ENCODE measurements at regions of chr7 and their contacts with region 1.

Region 1: DNA sequence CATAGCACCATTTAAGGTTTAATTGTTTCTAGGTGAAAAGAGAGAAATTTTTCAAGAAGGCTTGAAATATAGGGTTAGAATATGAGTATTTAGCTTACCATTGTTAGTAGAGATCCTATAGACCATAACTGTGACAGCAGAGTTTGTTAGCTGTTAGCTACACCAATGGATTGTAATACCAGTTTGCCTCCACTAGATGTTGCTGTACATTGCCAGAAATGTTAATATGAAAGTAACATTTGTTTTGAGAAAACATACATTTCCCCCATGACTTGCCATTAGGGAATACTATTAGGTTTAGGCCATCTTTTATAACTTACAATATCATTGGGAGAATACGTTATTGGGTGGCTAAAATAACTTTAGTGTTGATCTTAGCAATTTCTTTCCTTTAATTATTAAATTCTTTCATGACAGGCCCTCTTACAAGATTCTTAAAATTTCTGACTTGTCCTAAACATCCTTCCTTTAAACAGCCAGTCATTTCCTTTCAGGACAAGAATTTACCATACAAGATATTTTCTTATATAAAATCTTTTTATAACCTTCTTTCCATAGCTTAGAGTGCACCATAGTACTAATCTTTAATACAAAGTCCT is 39.5 kb downstream of the ZNF117 start:
- DNase-seq: peak; percentile 40 to 49 (median 42)
- H3K4me3 ChIP-seq: no peak overlapping the region
- H3K4me3 Mint-ChIP-seq: no peak overlapping the region
- H3K27ac ChIP-seq: no peak overlapping the region
- H3K27ac Mint-ChIP-seq: no peak overlapping the region
- H3K4me1 ChIP-seq: no peaks in the 10 kb centered on the region
- H3K4me1 Mint-ChIP-seq: peaks cover 0 to 6% (median 2%) of the 10 kb centered on the region in 4 donors
- H3K27me3 ChIP-seq: no peaks in the 10 kb centered on the region
- H3K27me3 Mint-ChIP-seq: peaks cover 28 to 31% of the 10 kb centered on the region in 2 donors

Region 2: DNA sequence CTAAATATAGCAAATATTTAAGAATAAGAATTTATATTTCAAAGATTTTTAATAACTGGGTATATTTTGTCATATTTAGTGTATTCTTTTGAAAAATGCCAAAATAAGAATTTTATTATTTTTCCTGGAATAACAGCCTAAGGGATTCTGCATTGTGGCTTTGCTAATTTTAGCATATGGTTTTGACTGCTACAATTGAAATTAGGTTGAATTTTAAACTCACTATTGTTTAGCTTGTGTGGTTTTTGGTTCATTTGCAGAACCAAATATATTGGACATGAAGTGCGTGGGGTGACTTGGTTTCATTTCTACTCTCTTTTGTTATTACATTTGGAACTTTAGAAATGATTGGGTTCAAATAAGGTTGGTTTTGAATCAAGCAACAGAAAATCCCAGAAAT is 12.8 kb before region 1 on chr7:
- CTCF ChIA-PET with region 1: interaction called, 16 read pairs
- POLR2A ChIA-PET with region 1: no interaction called
- intact Hi-C with region 1: no loop called
- DNase-seq: no peak
- H3K4me3 ChIP-seq: no peak overlapping the region
- H3K4me3 Mint-ChIP-seq: no peak overlapping the region
- H3K27ac ChIP-seq: no peak overlapping the region
- H3K27ac Mint-ChIP-seq: no peak overlapping the region
- H3K4me1 ChIP-seq: no peaks in the 10 kb centered on the region
- H3K4me1 Mint-ChIP-seq: no peaks in the 10 kb centered on the region
- H3K27me3 ChIP-seq: no peaks in the 10 kb centered on the region
- H3K27me3 Mint-ChIP-seq: peaks cover 0 to 3% of the 10 kb centered on the region in 2 donors

Region 3: GRCh38 chr7:65037740-65038678 is 86.7 kb after region 1 on chr7:
- CTCF ChIA-PET with region 1: no interaction called
- POLR2A ChIA-PET with region 1: no interaction called
- intact Hi-C with region 1: loop called (anchors 1 kb)
- DNase-seq: peak; percentile 90 to 94 (median 92)
- H3K4me3 ChIP-seq: peak overlapping the region in 1 of 2 donors; percentile 43
- H3K4me3 Mint-ChIP-seq: peak overlapping the region; percentile 68 to 85 (median 81)
- H3K27ac ChIP-seq: peak overlapping the region; percentile 56
- H3K27ac Mint-ChIP-seq: peak overlapping the region; percentile 79 to 93 (median 90)
- H3K4me1 ChIP-seq: peaks cover 14% of the 10 kb centered on the region
- H3K4me1 Mint-ChIP-seq: peaks cover 10 to 17% (median 14%) of the 10 kb centered on the region in 4 donors
- H3K27me3 ChIP-seq: no peaks in the 10 kb centered on the region
- H3K27me3 Mint-ChIP-seq: no peaks in the 10 kb centered on the region

Region 4: GRCh38 chr7:65216459-65216858 is 265.1 kb after region 1 on chr7:
- CTCF ChIA-PET with region 1: interaction called, 5 read pairs
- POLR2A ChIA-PET with region 1: no interaction called
- intact Hi-C with region 1: loop called (anchors 1 kb)
- DNase-seq: peak; percentile 53 to 72 (median 69)
- H3K4me3 ChIP-seq: no peak overlapping the region
- H3K4me3 Mint-ChIP-seq: peak overlapping the region in 5 of 8 donors; percentile 29 to 64 (median 44)
- H3K27ac ChIP-seq: no peak overlapping the region
- H3K27ac Mint-ChIP-seq: peak overlapping the region in 1 of 7 donors; percentile 17
- H3K4me1 ChIP-seq: no peaks in the 10 kb centered on the region
- H3K4me1 Mint-ChIP-seq: peaks cover 0 to 5% (median 3%) of the 10 kb centered on the region in 4 donors
- H3K27me3 ChIP-seq: no peaks in the 10 kb centered on the region
- H3K27me3 Mint-ChIP-seq: peaks cover 0 to 2% of the 10 kb centered on the region in 2 donors

Region 5: DNA sequence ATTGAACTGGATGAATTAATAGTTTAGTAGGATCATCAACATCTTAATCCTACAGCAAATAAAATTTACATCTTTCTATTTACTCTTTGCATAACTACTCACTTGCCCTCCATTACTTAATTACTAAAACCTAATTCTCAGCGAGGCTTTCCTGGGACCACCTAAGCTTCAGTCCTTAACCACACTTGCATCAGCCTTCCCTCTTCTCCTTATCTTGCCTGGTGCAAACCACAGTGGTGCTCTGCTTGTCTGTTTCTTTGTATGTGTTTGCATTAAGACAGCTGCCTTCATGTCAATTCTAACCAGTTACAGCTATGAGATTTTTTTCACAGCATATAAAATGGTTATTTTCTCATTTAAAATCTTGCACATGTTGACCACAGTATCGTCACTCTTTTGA is 349.7 kb after region 1 on chr7:
- CTCF ChIA-PET with region 1: interaction called, 16 read pairs
- POLR2A ChIA-PET with region 1: no interaction called
- intact Hi-C with region 1: no loop called
- DNase-seq: no peak
- H3K4me3 ChIP-seq: no peak overlapping the region
- H3K4me3 Mint-ChIP-seq: no peak overlapping the region
- H3K27ac ChIP-seq: no peak overlapping the region
- H3K27ac Mint-ChIP-seq: no peak overlapping the region
- H3K4me1 ChIP-seq: no peaks in the 10 kb centered on the region
- H3K4me1 Mint-ChIP-seq: no peaks in the 10 kb centered on the region
- H3K27me3 ChIP-seq: no peaks in the 10 kb centered on the region
- H3K27me3 Mint-ChIP-seq: peaks cover 2 to 7% of the 10 kb centered on the region in 2 donors

Region 6: DNA sequence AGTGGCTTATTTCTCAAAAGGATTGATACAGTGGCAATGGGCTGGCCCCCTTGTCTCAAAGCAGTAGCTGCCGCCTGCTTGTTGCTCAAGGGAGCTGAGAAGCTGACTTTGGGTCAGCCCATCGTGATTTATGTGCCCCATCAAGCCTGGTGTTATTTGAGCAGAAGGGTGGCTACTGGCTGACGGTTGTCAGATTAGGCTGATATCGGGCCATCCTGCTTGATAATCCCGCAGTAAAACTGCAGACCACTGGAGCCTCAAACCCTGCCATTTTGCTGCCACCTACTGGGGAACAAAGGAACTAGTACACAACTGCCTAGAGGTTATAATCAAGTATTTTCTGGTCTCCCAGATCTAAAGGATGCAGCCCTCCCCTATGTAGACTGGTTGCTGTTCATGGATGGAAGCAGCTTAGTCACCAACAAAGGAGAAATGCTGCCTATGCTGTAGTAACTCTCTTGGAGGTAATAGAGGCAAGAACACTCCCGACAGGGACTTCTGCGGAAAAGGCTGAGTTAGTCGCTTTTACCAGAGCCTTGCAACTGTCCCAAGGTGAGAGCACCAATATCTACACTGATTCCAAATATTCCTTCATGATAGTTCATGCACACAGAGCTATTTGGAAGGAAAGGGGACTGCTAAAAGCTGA is 356.4 kb after region 1 on chr7:
- CTCF ChIA-PET with region 1: interaction called, 104 read pairs
- POLR2A ChIA-PET with region 1: no interaction called
- intact Hi-C with region 1: loop called (anchors 1 kb)
- DNase-seq: peak; percentile 39 to 47 (median 42)
- H3K4me3 ChIP-seq: no peak overlapping the region
- H3K4me3 Mint-ChIP-seq: no peak overlapping the region
- H3K27ac ChIP-seq: no peak overlapping the region
- H3K27ac Mint-ChIP-seq: no peak overlapping the region
- H3K4me1 ChIP-seq: no peaks in the 10 kb centered on the region
- H3K4me1 Mint-ChIP-seq: peaks cover 0 to 3% (median 1%) of the 10 kb centered on the region in 4 donors
- H3K27me3 ChIP-seq: no peaks in the 10 kb centered on the region
- H3K27me3 Mint-ChIP-seq: peaks cover 3 to 5% of the 10 kb centered on the region in 2 donors

Region 7: GRCh38 chr7:65448816-65449504 is 497.6 kb after region 1 on chr7:
- CTCF ChIA-PET with region 1: no interaction called
- POLR2A ChIA-PET with region 1: no interaction called
- intact Hi-C with region 1: loop called (anchors 10 kb)
- DNase-seq: no peak
- H3K4me3 ChIP-seq: no peak overlapping the region
- H3K4me3 Mint-ChIP-seq: no peak overlapping the region
- H3K27ac ChIP-seq: no peak overlapping the region
- H3K27ac Mint-ChIP-seq: no peak overlapping the region
- H3K4me1 ChIP-seq: peaks cover 14% of the 10 kb centered on the region
- H3K4me1 Mint-ChIP-seq: peaks cover 13 to 33% (median 23%) of the 10 kb centered on the region in 4 donors
- H3K27me3 ChIP-seq: no peaks in the 10 kb centered on the region
- H3K27me3 Mint-ChIP-seq: peaks cover 0 to 1% of the 10 kb centered on the region in 2 donors